ENCODE measurements at regions of chr5 and their contacts with region 1.

Region 1: DNA sequence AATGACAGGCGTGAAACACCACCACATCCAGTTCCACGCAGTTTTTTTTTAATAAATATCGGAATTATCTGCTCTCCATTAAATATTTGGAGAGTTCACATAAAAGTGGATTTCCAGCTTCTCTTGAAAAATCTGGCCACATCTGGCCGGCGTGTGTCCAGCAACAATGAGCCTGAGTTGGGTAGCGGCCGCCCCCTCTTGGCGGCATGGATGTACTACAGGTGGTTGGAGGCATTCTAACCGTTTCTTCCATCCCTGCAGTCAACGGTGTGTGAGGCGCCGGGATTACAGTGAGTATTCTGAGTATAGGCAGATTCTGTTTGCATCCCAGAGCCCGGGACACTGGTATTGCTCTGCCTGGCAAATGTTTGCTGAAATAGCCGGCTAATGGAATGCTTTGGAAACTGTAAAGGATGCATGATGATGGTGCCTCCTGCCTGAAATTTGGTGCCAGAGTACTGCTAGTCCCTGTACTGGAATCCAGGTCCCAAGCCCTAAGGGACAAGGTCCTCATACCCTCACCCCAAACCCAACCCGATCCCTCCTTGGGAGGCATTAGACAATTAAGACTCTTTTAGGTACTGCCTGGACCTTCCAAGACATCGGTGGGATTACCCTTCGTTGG is 13.6 kb upstream of the GM2A start:
- DNase-seq: peak; percentile 75 to 83 (median 78)
- ATAC-seq: peak; percentile 95
- H3K4me3 ChIP-seq: no peak overlapping the region
- H3K27ac ChIP-seq: no peak overlapping the region
- H3K4me1 ChIP-seq: peaks cover 0 to 6% of the 10 kb centered on the region in 2 experiments; a peak in 3 of 5 replicates
- H3K27me3 ChIP-seq: peaks cover 0 to 22% of the 10 kb centered on the region in 2 experiments; a peak in 3 of 5 replicates
- CTCF ChIP-seq: peak; percentile 91 to 94 (median 92)
- EP300 ChIP-seq: no peak
- POLR2A ChIP-seq: no peak
- RAD21 ChIP-seq: peak; percentile 85 to 90

Region 2: GRCh38 chr5:151174612-151175101 is 64.7 kb before region 1 on chr5:
- CTCF ChIA-PET with region 1: no interaction called
- POLR2A ChIA-PET with region 1: interaction called, 3 read pairs
- in situ Hi-C with region 1: loop called (anchors 5 kb)
- intact Hi-C with region 1: no loop called
- DNase-seq: no peak
- ATAC-seq: no peak
- H3K4me3 ChIP-seq: no peak overlapping the region
- H3K27ac ChIP-seq: no peak overlapping the region
- H3K4me1 ChIP-seq: no peaks in the 10 kb centered on the region
- H3K27me3 ChIP-seq: peaks cover 4 to 14% of the 10 kb centered on the region in 2 experiments; a peak in 4 of 5 replicates
- CTCF ChIP-seq: no peak
- EP300 ChIP-seq: no peak
- POLR2A ChIP-seq: no peak
- RAD21 ChIP-seq: no peak

Region 3: DNA sequence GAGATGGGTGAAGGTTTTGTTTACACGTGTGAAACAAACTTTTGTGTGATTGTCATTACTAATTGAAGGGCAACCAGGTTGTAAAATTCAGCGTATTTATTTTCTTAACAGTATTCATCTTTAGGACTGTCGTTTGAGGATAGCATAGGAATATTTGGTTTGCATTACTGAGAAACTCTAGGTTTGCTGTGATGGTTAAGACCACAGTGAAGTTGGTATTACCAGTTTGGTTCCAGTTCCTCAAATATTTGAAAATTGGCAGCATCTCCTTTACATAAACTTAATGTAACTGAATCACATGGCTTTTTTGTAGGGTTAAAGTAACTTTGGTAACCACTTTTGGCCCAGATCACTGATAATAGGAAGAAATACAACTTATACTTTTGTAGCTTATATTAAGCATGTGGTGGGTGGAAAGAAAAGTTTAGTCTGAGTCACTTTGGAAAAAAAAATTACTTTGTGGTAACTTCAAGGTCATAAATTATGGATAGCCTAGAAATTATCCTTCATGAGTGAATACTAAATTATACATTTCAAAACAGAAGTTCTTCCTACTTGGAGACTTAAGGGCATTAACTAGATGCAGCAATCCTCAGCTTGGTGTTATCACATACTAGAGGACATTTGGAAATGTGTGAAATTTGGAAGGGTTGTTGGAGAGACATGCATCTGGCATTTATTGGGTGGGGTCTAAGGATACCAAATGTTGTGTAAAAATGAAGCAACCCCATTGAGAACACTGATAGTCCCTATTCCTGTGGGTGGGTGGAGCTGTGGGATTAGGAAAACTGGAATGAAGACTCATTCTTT is 566.3 kb after region 1 on chr5:
- CTCF ChIA-PET with region 1: no interaction called
- POLR2A ChIA-PET with region 1: no interaction called
- in situ Hi-C with region 1: no loop called
- intact Hi-C with region 1: no loop called
- DNase-seq: no peak
- ATAC-seq: no peak; the same call in 2 of the 3 replicates
- H3K4me3 ChIP-seq: no peak overlapping the region
- H3K27ac ChIP-seq: no peak overlapping the region
- H3K4me1 ChIP-seq: no peaks in the 10 kb centered on the region
- H3K27me3 ChIP-seq: no peaks in the 10 kb centered on the region
- CTCF ChIP-seq: no peak
- EP300 ChIP-seq: no peak
- POLR2A ChIP-seq: no peak
- RAD21 ChIP-seq: no peak